Sciatic nerve (tissue), 2 donors: ENCODE measurements at regions of chr1 and their contacts with region 1.

Region 1: GRCh38 chr1:145823565-145824498 is at the starts of genes POLR3C and RNF115:
- DNase-seq: peak; percentile 94
- ATAC-seq: peak; percentile 97
- total RNA-seq, gene POLR3C: 26.2 TPM
- total RNA-seq, gene RNF115: 19.9 TPM

Region 2: DNA sequence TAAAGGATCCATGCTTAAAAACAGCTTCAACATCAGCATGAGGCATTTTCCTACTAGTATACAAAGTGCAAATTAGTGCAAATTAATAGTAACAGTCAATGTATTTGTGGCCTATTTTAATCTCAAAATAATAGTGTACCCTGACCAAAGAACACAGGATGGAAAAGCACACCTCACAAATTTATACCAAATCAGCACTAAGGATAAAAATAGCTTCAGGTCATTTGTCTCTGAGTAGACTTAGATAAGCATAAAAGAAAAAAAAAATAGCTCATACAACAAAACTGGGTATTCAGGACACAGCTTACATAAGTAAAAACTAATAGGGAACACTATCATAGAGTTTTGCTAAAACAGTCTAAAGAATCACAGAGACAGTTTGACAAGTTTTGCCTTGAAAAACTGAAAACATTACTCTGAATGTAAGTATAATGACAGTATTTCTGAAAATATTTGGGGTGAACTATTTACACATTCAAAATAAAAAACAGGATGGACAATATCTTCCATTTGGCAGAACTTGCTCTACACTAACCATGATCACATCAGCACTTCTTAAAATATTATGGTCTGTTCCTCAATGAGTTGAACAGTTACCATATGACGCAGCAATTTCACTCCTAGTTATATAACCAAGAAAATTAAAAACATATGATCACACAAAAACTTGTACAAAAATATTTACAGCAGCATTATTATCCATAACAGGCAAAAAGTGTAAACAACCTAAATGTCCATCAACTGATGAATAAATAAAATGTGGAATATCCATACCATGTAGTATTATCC is 46.3 kb before region 1 on chr1:
- intact Hi-C with region 1: loop called (anchors 10 kb)
- DNase-seq: no peak
- ATAC-seq: peak; percentile 68

Region 3: GRCh38 chr1:145963995-145964901 is 140.4 kb after region 1 on chr1 and contains the starts of genes ANKRD34A and POLR3GL:
- intact Hi-C with region 1: no loop called
- DNase-seq: peak; percentile 97
- ATAC-seq: peak; percentile 90
- total RNA-seq, gene ANKRD34A: 1.2 TPM
- total RNA-seq, gene POLR3GL: 22.3 TPM